ENCODE measurements at regions of chr14 and their contacts with region 1.

Region 1: GRCh38 chr14:34059855-34060638 is 109.2 kb upstream of the EGLN3 start:
- DNase-seq: peak; percentile 79
- CTCF ChIP-seq: peak; percentile 23

Region 2: DNA sequence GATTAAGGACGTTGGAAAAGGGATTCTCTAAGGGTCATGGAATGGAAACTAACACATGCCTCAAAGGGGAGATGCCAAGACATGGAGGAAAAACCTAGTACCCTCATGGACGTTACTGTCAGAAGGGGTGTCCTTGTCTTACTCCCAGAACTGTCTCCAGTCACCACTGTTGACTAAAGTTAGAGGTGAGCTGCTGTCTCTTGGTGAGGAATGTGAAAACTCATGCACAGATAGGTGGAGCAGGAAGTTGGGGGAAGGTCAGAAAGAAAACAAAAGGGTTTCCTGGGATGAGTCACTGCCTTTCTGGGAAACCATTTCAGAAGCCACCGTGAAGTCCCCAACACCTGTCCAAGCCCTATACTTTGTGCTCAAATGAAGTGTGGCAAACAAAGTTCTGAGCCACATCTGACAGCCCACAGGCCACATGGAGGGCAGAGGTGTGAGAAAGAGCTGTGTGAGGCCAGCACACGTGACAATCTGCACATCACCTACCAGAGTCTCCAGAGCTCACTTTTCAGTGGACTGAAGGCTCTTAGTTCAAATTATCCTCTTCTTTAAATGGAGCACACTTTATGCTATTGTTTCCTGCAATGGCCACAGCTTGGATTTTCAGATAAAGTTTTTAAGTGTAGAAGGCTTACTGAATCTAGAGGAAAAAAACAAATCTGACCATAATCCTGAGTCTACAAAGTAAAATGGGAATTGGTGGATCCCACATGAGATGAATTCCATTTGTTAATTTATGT is 16.2 kb before region 1 on chr14:
- CTCF ChIA-PET with region 1: interaction called, 13 read pairs
- POLR2A ChIA-PET with region 1: no interaction called
- DNase-seq: peak; percentile 70
- CTCF ChIP-seq: no peak

Region 3: GRCh38 chr14:34275078-34275477 is 215.0 kb after region 1 on chr14:
- CTCF ChIA-PET with region 1: no interaction called
- POLR2A ChIA-PET with region 1: no interaction called
- DNase-seq: no peak
- CTCF ChIP-seq: no peak